Transverse colon (tissue), 4 donors: ENCODE measurements at regions of chr10 and their contacts with region 1.

Region 1: GRCh38 chr10:683448-684071 is 5.9 kb downstream of the DIP2C start:
- DNase-seq: no peak
- H3K4me3 ChIP-seq: peak overlapping the region in 1 of 4 donors; percentile 15
- H3K27ac ChIP-seq: peak overlapping the region; percentile 75 to 89 (median 80)
- H3K4me1 ChIP-seq: peaks cover 0 to 24% (median 16%) of the 10 kb centered on the region in 4 donors
- H3K27me3 ChIP-seq: no peaks in the 10 kb centered on the region
- CTCF ChIP-seq: no peak
- EP300 ChIP-seq: peak; percentile 77
- POLR2A ChIP-seq: no peak

Region 2: DNA sequence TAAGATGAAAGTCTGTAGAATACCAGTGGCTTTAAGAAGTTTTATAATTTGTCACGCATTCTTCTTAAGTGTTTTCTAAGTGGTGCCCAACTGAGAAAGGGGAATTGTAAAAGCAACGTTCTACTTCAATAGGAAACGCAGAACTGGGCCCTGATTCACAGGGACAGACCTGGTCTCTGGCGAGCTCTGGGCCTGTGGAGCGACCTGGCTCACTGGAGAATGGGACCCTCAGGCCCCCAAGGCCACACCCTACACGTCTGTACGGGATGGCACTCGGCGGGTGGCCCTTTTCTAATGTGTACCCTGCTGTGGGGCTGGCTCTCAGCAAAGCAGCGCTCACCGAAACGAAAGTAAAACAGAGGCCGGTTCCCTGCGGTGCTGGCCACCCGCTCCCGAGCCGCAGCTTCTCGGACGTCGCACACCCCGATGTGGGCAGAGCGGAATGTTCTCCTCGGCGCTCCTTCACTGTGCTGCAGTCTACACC is 199.1 kb before region 1 on chr10:
- in situ Hi-C with region 1: no loop called
- intact Hi-C with region 1: no loop called
- DNase-seq: peak; percentile 35
- H3K4me3 ChIP-seq: peak overlapping the region; percentile 5 to 35 (median 23)
- H3K27ac ChIP-seq: peak overlapping the region; percentile 72 to 88 (median 76)
- H3K4me1 ChIP-seq: peaks cover 0 to 23% (median 5%) of the 10 kb centered on the region in 4 donors
- H3K27me3 ChIP-seq: no peaks in the 10 kb centered on the region
- CTCF ChIP-seq: no peak
- EP300 ChIP-seq: no peak
- POLR2A ChIP-seq: no peak

Region 3: GRCh38 chr10:649798-650440 is 33.6 kb before region 1 on chr10:
- in situ Hi-C with region 1: no loop called
- intact Hi-C with region 1: loop called (anchors 2 kb)
- DNase-seq: peak; percentile 87
- H3K4me3 ChIP-seq: peak overlapping the region; percentile 14 to 43 (median 30)
- H3K27ac ChIP-seq: peak overlapping the region; percentile 92 to 96 (median 92)
- H3K4me1 ChIP-seq: peaks cover 8 to 39% (median 29%) of the 10 kb centered on the region in 4 donors
- H3K27me3 ChIP-seq: no peaks in the 10 kb centered on the region
- CTCF ChIP-seq: no peak
- EP300 ChIP-seq: peak; percentile 99
- POLR2A ChIP-seq: peak; percentile 86

Region 4: DNA sequence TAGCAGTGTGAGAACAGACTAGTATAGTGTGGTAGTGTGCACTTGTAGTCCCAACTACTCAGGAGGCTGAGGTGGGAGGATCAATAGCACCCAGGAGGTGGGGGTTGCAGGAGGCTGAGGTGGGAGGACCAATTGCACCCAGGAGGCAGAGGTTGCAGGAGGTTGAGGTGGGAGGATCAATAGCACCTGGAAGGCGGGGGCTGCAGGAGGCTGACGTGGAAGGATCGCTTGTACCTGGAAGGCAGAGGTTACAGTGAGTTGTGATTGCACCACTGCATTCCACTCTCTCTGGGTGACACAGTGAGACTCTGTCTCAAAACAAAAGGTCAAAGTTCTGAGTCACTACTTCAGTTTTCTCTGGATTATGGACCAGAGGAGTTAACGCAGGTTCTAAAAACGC is 28.5 kb after region 1 on chr10:
- in situ Hi-C with region 1: no loop called
- intact Hi-C with region 1: no loop called
- DNase-seq: no peak
- H3K4me3 ChIP-seq: no peak overlapping the region
- H3K27ac ChIP-seq: no peak overlapping the region
- H3K4me1 ChIP-seq: no peaks in the 10 kb centered on the region
- H3K27me3 ChIP-seq: no peaks in the 10 kb centered on the region
- CTCF ChIP-seq: no peak
- EP300 ChIP-seq: no peak
- POLR2A ChIP-seq: no peak